ENCODE measurements at regions of chr4 and their contacts with region 1.

Region 1: GRCh38 chr4:55125087-55125721 is at the start of gene KDR:
- DNase-seq: peak; percentile 68
- H3K4me3 ChIP-seq: peak within 1 kb of the TSS; percentile 92 to 94 (median 93)
- H3K27ac ChIP-seq: peak within 1 kb of the TSS; percentile 54
- H3K4me1 ChIP-seq: peaks cover 41% of the 10 kb centered on the region
- H3K27me3 ChIP-seq: no peaks in the 10 kb centered on the region
- CTCF ChIP-seq: no peak
- POLR2A ChIP-seq: peak; percentile 98
- total RNA-seq, gene KDR: 139 and 145 TPM in 2 replicates

Region 2: GRCh38 chr4:53622739-53623151 is 1502.5 kb before region 1 on chr4:
- CTCF ChIA-PET with region 1: no interaction called
- POLR2A ChIA-PET with region 1: no interaction called
- dilution Hi-C with region 1: no loop called
- intact Hi-C with region 1: no loop called
- DNase-seq: no peak
- H3K4me3 ChIP-seq: no peak overlapping the region
- H3K27ac ChIP-seq: no peak overlapping the region
- H3K4me1 ChIP-seq: no peaks in the 10 kb centered on the region
- H3K27me3 ChIP-seq: peaks cover 5 to 13% of the 10 kb centered on the region in 2 experiments
- CTCF ChIP-seq: no peak
- POLR2A ChIP-seq: no peak

Region 3: DNA sequence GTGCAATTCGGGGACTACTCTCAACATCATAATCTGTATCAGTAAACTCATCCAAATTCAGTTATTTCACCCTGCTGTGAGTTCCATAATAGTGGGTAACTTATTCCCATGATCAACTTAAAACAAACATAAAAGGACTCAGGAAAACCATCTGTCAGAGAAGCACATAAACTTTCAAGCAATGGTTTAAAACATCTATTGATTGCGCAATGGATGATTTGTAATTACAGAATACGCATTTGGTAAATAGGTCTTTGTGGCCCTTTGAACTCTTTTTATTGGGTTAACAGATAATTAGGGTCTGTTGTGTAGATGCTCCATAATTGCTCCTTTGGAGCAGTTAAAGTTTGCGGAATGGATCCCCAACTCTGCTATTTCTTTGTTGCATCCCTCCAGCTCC is 352.2 kb before region 1 on chr4:
- CTCF ChIA-PET with region 1: no interaction called
- POLR2A ChIA-PET with region 1: no interaction called
- dilution Hi-C with region 1: no loop called
- intact Hi-C with region 1: no loop called
- DNase-seq: no peak
- H3K4me3 ChIP-seq: no peak overlapping the region
- H3K27ac ChIP-seq: no peak overlapping the region
- H3K4me1 ChIP-seq: no peaks in the 10 kb centered on the region
- H3K27me3 ChIP-seq: peaks cover 0 to 2% of the 10 kb centered on the region in 2 experiments
- CTCF ChIP-seq: no peak
- POLR2A ChIP-seq: no peak

Region 4: GRCh38 chr4:54986095-54986846 is 138.9 kb before region 1 on chr4:
- CTCF ChIA-PET with region 1: no interaction called
- POLR2A ChIA-PET with region 1: no interaction called
- dilution Hi-C with region 1: no loop called
- intact Hi-C with region 1: no loop called
- DNase-seq: no peak
- H3K4me3 ChIP-seq: no peak overlapping the region
- H3K27ac ChIP-seq: no peak overlapping the region
- H3K4me1 ChIP-seq: no peaks in the 10 kb centered on the region
- H3K27me3 ChIP-seq: no peaks in the 10 kb centered on the region
- CTCF ChIP-seq: no peak
- POLR2A ChIP-seq: no peak

Region 5: GRCh38 chr4:55078987-55079386 is 46.2 kb before region 1 on chr4:
- CTCF ChIA-PET with region 1: interaction called, 3 read pairs
- POLR2A ChIA-PET with region 1: interaction called, 3 read pairs
- dilution Hi-C with region 1: no loop called
- intact Hi-C with region 1: loop called (anchors 5 kb)
- DNase-seq: peak; percentile 92
- H3K4me3 ChIP-seq: peak overlapping the region in 1 of 3 experiments; percentile 28
- H3K27ac ChIP-seq: peak overlapping the region; percentile 99
- H3K4me1 ChIP-seq: peaks cover 48% of the 10 kb centered on the region
- H3K27me3 ChIP-seq: no peaks in the 10 kb centered on the region
- CTCF ChIP-seq: no peak
- POLR2A ChIP-seq: peak; percentile 79

Region 6: GRCh38 chr4:55175779-55176231 is 50.6 kb after region 1 on chr4:
- CTCF ChIA-PET with region 1: interaction called, 7 read pairs
- POLR2A ChIA-PET with region 1: interaction called, 11 read pairs
- dilution Hi-C with region 1: no loop called
- intact Hi-C with region 1: loop called (anchors 1 kb)
- DNase-seq: peak; percentile 66
- H3K4me3 ChIP-seq: peak overlapping the region in 1 of 3 experiments; percentile 39
- H3K27ac ChIP-seq: peak overlapping the region; percentile 91
- H3K4me1 ChIP-seq: peaks cover 72% of the 10 kb centered on the region
- H3K27me3 ChIP-seq: no peaks in the 10 kb centered on the region
- CTCF ChIP-seq: no peak
- POLR2A ChIP-seq: no peak

Region 7: DNA sequence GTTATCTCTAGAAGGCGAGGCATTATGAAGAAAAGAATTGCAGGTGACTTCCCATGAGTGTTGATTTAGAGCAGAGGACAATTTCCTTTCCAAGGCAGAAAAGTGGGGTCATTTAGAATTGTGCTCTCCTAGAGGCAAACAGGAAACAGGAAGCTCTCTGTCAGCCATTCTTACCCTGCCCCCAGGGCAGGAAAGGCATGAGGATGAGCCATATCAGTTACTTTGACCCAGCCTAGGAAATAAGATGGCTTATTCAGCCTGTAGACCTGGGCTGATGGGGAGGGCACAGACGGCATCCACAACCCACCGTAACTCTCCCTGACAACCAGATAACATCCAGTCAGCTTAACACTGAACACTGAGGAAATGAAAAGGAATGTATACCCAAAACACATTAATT is 89.0 kb after region 1 on chr4:
- CTCF ChIA-PET with region 1: interaction called, 3 read pairs
- POLR2A ChIA-PET with region 1: interaction called, 5 read pairs
- dilution Hi-C with region 1: no loop called
- intact Hi-C with region 1: loop called (anchors 1 kb)
- DNase-seq: peak; percentile 76
- H3K4me3 ChIP-seq: no peak overlapping the region
- H3K27ac ChIP-seq: peak overlapping the region; percentile 66
- H3K4me1 ChIP-seq: peaks cover 20% of the 10 kb centered on the region
- H3K27me3 ChIP-seq: no peaks in the 10 kb centered on the region
- CTCF ChIP-seq: no peak
- POLR2A ChIP-seq: peak; percentile 42

Region 8: DNA sequence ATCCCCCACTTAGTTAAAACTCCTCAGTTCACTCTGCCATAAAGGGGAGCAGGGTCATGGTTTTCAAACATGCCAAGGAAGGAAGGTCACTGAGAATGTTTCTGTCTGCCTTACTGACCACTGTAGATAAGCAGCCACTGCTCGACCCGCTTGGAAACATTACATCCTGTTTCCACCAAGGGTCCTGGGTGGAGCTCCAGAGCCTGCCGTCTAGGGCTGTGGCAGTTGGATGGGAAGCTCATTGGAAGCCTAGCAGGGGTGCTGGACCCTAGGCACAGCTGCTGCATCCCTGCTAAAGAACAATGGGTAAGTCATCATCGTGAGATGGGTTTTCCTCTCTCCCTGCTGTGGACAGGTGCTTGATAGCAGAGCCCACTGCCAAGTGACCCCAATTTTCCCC is 144.8 kb after region 1 on chr4:
- CTCF ChIA-PET with region 1: interaction called, 5 read pairs
- POLR2A ChIA-PET with region 1: interaction called, 10 read pairs
- dilution Hi-C with region 1: no loop called
- intact Hi-C with region 1: no loop called
- DNase-seq: peak; percentile 96
- H3K4me3 ChIP-seq: no peak overlapping the region
- H3K27ac ChIP-seq: no peak overlapping the region
- H3K4me1 ChIP-seq: peaks cover 13% of the 10 kb centered on the region
- H3K27me3 ChIP-seq: peaks cover 5 to 7% of the 10 kb centered on the region in 2 experiments
- CTCF ChIP-seq: no peak
- POLR2A ChIP-seq: peak; percentile 51

Region 9: GRCh38 chr4:55321707-55322264 is 196.6 kb after region 1 on chr4:
- CTCF ChIA-PET with region 1: interaction called, 12 read pairs
- POLR2A ChIA-PET with region 1: interaction called, 4 read pairs
- dilution Hi-C with region 1: no loop called
- intact Hi-C with region 1: loop called (anchors 1 kb)
- DNase-seq: peak; percentile 82
- H3K4me3 ChIP-seq: no peak overlapping the region
- H3K27ac ChIP-seq: no peak overlapping the region
- H3K4me1 ChIP-seq: peaks cover 41% of the 10 kb centered on the region
- H3K27me3 ChIP-seq: no peaks in the 10 kb centered on the region
- CTCF ChIP-seq: peak; percentile 45 to 49
- POLR2A ChIP-seq: no peak

Region 10: DNA sequence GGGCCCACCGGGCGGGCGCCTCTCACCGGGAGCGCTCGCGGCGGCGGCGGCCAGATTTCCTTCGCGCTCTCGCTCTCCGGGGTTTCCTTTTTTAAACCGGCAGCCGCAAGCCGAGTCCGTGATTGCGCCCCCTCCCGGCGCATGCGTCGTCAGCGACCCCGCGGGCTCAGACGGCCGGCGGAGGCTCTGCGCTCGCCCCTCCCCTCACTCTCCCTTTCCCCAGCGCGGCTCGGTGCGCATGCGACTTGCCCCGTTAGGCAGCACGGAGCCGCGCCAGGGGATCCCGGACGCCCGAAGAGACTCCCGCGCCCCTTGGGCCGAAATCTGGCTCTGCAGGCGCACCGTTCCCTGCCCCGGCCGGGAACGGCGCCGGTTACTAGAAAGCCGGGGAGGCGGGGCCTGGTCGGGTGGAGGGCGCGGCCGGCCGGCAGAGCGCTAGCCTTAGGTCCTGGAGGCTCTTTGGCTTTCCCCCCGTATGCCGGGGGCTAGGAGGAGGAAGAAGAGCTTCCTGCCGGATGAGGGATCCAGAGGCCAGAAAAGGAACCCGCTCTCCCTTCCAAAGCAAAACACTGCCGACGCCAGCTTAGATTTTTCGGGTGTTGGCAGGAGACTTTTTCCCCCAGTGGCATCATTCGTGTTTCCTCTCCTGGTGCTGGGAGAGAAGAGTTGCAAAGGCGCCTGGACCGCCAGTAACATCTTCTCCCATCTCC is 421.7 kb after region 1 on chr4 and contains the start of gene CLOCK:
- CTCF ChIA-PET with region 1: interaction called, 4 read pairs
- POLR2A ChIA-PET with region 1: no interaction called
- dilution Hi-C with region 1: no loop called
- intact Hi-C with region 1: loop called (anchors 5 kb)
- DNase-seq: peak; percentile 89
- H3K4me3 ChIP-seq: peak within 1 kb of the TSS; percentile 86 to 92 (median 88)
- H3K27ac ChIP-seq: peak within 1 kb of the TSS; percentile 67
- H3K4me1 ChIP-seq: peaks cover 11% of the 10 kb centered on the region
- H3K27me3 ChIP-seq: peaks cover 0 to 2% of the 10 kb centered on the region in 2 experiments
- CTCF ChIP-seq: peak; percentile 41 to 66
- POLR2A ChIP-seq: peak; percentile 44
- total RNA-seq, gene CLOCK: 22.2 and 23.8 TPM in 2 replicates

Measured in endothelial cell of umbilical vein (primary cell).